A549 (cell line): ENCODE measurements at regions of chr5 and their contacts with region 1.

Region 1: DNA sequence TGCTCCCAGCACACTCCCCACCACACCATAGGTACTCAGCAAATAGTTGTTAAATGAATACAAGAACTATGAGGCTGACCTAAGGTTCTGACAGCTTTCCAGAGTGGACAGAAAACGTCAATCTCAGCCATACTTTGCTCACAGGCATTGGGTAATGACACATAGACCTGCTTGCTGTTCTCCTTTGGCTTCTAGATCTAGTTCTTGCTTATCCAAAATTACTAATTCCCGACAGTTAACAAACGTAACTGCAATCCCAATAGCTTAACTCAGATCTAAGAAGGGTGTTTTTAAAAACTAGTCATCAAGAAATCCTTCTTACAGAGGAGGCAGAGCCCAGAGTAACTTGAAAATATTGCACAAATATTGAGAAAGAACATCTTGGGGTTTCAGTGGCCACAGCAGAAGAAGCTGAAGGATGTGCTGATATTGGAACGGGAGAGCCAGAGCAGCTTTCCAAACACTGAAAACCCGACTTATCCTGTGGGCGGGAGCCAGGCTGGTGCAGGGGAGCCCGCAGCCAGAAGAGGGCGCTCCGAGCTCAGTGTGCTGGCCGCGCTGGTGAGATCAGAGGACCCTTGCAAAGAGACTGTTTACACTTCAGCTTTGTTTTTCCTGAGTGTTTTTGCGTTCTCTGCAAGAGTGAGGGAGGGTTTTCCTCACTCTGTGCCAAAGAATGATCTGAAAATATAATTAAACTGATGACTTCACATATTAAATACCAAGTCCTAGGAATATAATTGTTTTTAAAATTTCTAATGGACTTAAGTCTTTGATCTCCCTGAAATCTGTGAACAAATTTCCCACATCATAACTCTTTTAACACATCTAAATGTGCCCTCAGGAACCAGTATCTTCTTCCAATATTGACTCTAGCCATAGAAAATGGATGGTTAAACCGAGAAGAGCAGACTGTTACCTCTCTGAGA is 30.3 kb downstream of the FGF1 start:
- DNase-seq: peak; percentile 71 to 81
- ATAC-seq: peak; percentile 95 to 98
- H3K4me3 ChIP-seq: no peak overlapping the region
- H3K27ac ChIP-seq: no peak overlapping the region
- H3K4me1 ChIP-seq: peaks cover 4% of the 10 kb centered on the region; the same call in 1 of the 3 replicates
- CTCF ChIP-seq: peak; percentile 98
- EP300 ChIP-seq: no peak
- POLR2A ChIP-seq: no peak
- RAD21 ChIP-seq: peak; percentile 97

Region 2: DNA sequence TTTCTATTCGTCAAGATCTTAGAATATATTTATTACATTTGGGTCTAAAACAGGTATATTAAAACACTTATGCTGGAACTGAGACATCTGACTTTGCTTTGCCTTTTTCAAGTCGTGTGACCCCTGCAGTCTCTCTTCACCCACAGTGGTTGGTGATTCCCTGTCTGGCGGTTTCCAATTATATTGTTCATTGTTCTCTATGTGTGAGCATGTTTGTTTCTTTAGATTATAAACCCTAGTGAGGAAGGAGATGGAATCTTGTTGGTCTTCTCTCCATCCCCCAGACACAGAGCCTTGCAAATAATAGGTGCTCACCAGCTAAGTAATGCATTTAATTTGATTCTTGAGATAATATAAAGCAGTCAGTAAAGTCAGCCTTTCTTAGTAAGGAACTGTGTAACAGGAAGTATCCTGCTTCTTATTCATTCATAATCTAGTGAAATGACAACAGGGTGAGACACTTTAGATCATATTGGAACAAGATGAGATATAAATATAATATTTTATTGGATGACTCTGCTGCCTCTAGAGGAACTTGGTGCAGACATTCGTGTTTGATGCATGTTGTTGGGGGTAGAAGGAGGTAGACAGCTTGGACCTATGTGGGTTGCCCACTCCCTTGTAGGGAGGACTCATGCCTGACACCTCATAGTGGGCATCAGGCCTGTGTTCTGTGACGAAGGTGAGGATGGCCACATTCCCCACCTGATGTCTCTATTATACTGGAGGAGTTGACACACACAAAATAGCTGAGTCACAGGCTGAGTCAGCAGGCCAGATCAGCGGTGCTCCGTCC is 57.9 kb before region 1 on chr5:
- CTCF ChIA-PET with region 1: interaction called, 40 read pairs
- POLR2A ChIA-PET with region 1: no interaction called
- DNase-seq: peak; percentile 50 to 85
- ATAC-seq: peak; percentile 83 to 85
- H3K4me3 ChIP-seq: no peak overlapping the region
- H3K27ac ChIP-seq: peak overlapping the region; percentile 83 to 85
- H3K4me1 ChIP-seq: peaks cover 51% of the 10 kb centered on the region
- CTCF ChIP-seq: peak; percentile 20; the same call in 1 of the 3 replicates
- EP300 ChIP-seq: no peak
- POLR2A ChIP-seq: no peak
- RAD21 ChIP-seq: no peak

Region 3: DNA sequence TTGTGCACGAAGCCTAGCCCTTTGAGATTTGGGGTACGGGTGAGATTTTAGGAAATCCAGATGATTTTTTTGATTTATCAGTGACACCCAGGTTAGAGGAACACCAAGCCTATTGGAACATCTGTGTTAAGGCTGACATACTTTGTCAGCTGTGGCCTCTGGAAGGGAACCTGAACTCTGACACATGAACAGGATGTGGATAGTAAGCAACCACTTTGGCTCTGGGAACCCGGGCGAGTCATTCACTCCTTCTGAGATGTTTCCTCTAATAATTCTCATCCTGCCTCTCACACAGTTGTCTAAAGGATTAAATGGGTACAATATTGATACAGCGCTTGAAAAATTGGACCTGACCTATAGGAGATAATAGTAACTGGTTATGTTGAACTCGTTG is 37.5 kb before region 1 on chr5:
- CTCF ChIA-PET with region 1: interaction called, 97 read pairs
- POLR2A ChIA-PET with region 1: no interaction called
- DNase-seq: no peak
- ATAC-seq: no peak
- H3K4me3 ChIP-seq: no peak overlapping the region
- H3K27ac ChIP-seq: no peak overlapping the region
- H3K4me1 ChIP-seq: peaks cover 9% of the 10 kb centered on the region
- CTCF ChIP-seq: no peak
- EP300 ChIP-seq: no peak
- POLR2A ChIP-seq: no peak
- RAD21 ChIP-seq: no peak

Region 4: DNA sequence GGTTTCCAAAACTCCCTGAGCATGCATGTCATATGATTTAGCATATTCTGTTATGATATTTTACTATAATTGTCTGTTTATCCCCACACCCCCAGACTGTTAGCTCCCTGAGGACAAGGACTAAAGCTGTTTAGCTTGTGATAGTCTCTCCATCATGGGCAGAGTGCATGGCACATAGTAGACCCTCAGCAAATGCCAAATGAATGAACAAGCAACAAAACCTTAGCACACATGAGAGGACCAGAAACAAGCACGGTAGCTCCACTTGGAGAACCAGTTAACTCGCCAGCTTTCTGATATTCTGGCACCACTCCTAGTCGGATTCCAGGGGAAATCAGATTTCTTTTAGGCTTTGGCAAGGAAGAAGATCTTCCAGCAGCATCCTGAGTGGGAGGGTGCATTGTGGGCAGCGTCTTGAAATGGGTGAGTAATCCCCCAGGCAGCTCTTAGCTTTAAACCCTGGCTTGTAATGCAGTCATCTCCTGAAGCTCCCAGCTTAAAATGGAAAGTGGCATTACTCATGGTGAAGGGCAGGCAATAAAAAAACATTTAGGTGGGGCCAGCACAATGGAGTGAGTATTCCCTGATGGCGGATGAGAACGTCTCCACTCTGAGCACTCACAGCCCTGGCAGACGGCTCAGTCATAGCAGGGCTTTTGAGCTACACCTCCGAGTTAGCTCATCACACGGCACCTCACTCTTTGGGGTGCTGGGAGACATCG is 10.8 kb before region 1 on chr5:
- CTCF ChIA-PET with region 1: interaction called, 95 read pairs
- POLR2A ChIA-PET with region 1: no interaction called
- DNase-seq: peak; percentile 83 to 85
- ATAC-seq: peak; percentile 94 to 97
- H3K4me3 ChIP-seq: no peak overlapping the region
- H3K27ac ChIP-seq: peak overlapping the region; percentile 3 to 77; a peak in 4 of 6 replicates
- H3K4me1 ChIP-seq: peaks cover 18% of the 10 kb centered on the region
- CTCF ChIP-seq: no peak
- EP300 ChIP-seq: no peak
- POLR2A ChIP-seq: no peak
- RAD21 ChIP-seq: no peak

Region 5: DNA sequence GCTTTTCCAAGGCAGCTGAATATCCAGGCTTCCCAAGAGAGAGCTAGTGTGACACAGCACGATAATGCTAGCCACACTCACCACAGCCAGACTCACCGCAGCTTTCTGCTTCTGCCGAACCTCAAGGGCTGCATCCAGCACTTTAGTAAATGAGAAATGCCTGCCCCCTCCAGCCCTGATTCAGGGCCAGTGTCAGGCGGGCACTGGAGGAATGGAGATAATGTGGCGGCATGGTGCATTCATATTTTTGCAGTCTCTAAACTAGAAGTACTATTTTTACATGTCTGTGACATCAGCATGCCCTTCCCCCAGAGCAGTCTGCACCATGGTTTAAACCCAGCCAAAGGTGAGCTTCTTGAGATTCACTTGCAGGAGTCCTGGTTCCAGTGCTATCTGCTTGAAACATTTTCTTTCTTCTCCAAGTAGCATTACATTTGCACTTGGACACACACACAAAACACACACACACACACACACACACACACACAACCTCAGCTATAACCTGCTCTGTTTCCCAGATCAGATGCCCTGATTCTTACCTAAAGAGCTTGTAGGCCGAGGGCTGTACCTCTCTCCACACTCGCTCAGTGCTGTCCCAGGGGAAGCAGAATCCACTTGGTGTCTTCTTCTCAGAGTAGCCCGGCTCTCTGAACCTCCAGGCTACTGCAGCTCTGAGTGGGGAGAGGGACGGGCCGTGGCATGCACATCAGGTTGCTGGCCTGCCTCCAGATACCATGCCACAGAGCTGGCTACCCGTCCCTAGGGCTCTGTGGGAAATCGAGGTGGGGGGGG is 30.0 kb after region 1 on chr5 and contains the start of gene FGF1:
- CTCF ChIA-PET with region 1: interaction called, 583 read pairs
- POLR2A ChIA-PET with region 1: no interaction called
- DNase-seq: no peak
- ATAC-seq: peak in 1 of 2 experiments; percentile 35; a peak in 3 of 6 replicates
- H3K4me3 ChIP-seq: no peak within 1 kb of the TSS
- H3K27ac ChIP-seq: no peak within 1 kb of the TSS
- H3K4me1 ChIP-seq: peaks cover 11% of the 10 kb centered on the region
- CTCF ChIP-seq: no peak
- EP300 ChIP-seq: no peak
- POLR2A ChIP-seq: no peak
- RAD21 ChIP-seq: no peak
- polyA plus RNA-seq, gene FGF1: 0.05 and 0.15 TPM in 2 replicates

Region 6: DNA sequence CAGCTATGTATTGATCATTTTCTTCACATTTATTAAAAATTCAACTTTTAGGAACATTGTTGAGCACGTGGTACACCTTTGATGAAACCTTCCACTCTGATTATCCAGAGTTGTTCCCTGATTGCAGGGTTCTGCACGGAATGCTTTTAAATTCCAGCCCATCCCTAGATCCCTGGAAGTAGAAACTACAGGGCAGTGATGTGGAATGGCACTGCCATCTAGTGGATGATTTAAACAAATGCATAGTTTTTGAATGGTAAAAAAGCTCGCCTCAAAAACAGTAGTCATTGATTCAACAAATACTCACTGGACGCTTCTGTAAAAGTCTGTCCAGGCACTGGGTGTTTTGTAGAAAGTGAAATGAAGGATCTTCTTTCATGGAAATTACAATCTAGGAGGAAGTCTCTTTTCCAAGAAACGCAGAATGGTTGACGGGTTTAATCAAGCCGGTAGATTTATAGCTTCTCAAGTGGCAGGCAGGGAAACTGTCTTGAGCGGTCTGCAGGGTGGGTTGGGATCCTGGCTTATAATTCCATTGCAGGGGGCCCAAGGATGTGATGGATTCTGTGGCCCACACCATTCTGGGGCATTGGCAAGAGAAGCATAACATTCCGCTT is 233.0 kb after region 1 on chr5:
- CTCF ChIA-PET with region 1: interaction called, 20 read pairs
- POLR2A ChIA-PET with region 1: no interaction called
- DNase-seq: peak; percentile 60 to 72
- ATAC-seq: peak; percentile 81 to 92
- H3K4me3 ChIP-seq: no peak overlapping the region
- H3K27ac ChIP-seq: no peak overlapping the region
- H3K4me1 ChIP-seq: 0 out of 3 replicates have a peak, but pooled peaks cover 3% of the 10 kb centered on the region
- CTCF ChIP-seq: peak; percentile 91
- EP300 ChIP-seq: no peak
- POLR2A ChIP-seq: no peak
- RAD21 ChIP-seq: peak; percentile 90 to 93